HepG2 (cell line): ENCODE measurements at regions of chr1 and their contacts with region 1.

Region 1: DNA sequence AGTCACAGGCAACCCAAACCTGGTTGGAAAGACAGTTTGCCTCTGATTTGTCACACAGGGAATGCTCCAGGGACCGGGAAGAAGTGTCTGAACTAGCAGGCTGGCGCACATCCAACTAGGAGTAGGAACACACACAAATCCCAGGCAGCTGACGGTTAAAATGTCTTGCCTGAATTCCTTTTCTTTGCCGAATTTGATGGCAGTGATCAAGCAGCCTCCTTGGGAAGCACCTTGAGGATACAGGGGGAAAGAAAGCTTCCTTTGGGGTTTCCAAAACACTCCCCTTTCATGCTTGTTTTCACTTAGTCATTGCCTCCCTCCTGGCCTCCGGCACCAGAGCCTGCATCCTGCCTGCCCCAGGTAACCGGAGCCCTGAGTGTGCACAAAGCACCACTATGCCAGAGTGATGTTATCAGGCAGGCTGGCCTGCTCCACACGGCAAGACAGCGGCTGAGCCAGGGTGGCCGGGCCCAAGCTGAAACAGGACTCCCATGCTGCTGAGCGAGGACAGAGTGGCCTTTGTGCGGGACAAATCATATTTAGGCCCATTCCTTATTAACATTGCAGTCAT is 193.8 kb downstream of the LMX1A start:
- DNase-seq: peak; percentile 2
- ATAC-seq: peak; percentile 77
- H3K4me3 ChIP-seq: no peak overlapping the region
- H3K27ac ChIP-seq: no peak overlapping the region
- H3K4me1 ChIP-seq: no peaks in the 10 kb centered on the region
- H3K27me3 ChIP-seq: peaks cover 0 to 7% of the 10 kb centered on the region in 2 experiments; a peak in 1 of 5 replicates
- CTCF ChIP-seq: no peak
- EP300 ChIP-seq: no peak
- POLR2A ChIP-seq: no peak
- RAD21 ChIP-seq: no peak

Region 2: GRCh38 chr1:165152727-165153126 is 10.0 kb before region 1 on chr1:
- CTCF ChIA-PET with region 1: no interaction called
- POLR2A ChIA-PET with region 1: no interaction called
- in situ Hi-C with region 1: no loop called
- intact Hi-C with region 1: no loop called
- DNase-seq: peak; percentile 6
- ATAC-seq: peak; percentile 96
- H3K4me3 ChIP-seq: no peak overlapping the region
- H3K27ac ChIP-seq: no peak overlapping the region
- H3K4me1 ChIP-seq: peaks cover 5% of the 10 kb centered on the region
- H3K27me3 ChIP-seq: no peaks in the 10 kb centered on the region
- CTCF ChIP-seq: peak; percentile 72
- EP300 ChIP-seq: no peak
- POLR2A ChIP-seq: no peak
- RAD21 ChIP-seq: no peak

Region 3: GRCh38 chr1:165228676-165229075 is 65.9 kb after region 1 on chr1:
- CTCF ChIA-PET with region 1: no interaction called
- POLR2A ChIA-PET with region 1: no interaction called
- in situ Hi-C with region 1: no loop called
- intact Hi-C with region 1: loop called (anchors 10 kb)
- DNase-seq: no peak
- ATAC-seq: no peak
- H3K4me3 ChIP-seq: no peak overlapping the region
- H3K27ac ChIP-seq: no peak overlapping the region
- H3K4me1 ChIP-seq: peaks cover 12% of the 10 kb centered on the region
- H3K27me3 ChIP-seq: peaks cover 0 to 2% of the 10 kb centered on the region in 2 experiments; a peak in 3 of 5 replicates
- CTCF ChIP-seq: no peak
- EP300 ChIP-seq: no peak
- POLR2A ChIP-seq: no peak
- RAD21 ChIP-seq: no peak